Activated T-helper 2 cell treated with anti-CD3 and anti-CD28 coated beads, Interferon-gamma antibody, Interleukin-2, Interleukin-4, amounts not matched to agents 10 μg/mL and 5 μg/mL and 100 μg/mL, durations not matched to agents 14 hours and 24 hours and 36 hours (primary cell): ENCODE measurements at regions of chr1 and their contacts with region 1.

Region 1: DNA sequence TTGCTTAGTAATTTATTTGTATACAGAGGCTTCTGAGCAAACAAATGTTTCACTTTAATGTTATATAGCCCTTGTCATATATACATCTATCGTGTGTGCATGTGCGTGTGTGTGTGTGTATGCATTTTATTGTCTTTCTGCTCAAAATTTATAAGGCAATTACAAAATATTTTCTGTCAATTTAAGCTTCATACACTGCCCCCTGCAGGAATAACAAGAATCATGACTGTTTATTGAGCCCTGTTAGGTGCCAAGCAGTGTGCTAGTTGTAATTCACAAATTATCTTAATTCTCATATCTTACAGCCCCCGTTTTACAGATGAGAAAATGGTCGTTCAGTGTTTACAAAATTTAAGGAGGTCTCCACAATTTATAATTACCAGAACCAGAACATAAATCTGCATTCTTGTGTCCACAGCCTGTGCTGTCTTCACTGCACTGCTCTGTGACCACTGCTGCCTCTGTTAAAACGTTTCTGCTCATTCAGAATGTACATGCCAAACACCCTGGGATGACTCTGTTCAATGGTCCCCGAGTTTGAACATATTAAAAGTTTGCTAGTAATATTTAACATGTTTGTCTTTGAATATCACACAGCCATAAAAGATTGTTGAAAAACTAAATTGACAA is 181.3 kb downstream of the ATP6V1G3 start:
- DNase-seq: no peak
- H3K4me3 Mint-ChIP-seq: no peak overlapping the region
- H3K27ac Mint-ChIP-seq: no peak overlapping the region
- H3K4me1 Mint-ChIP-seq: peaks cover 10% of the 10 kb centered on the region
- H3K27me3 Mint-ChIP-seq: peaks cover 11% of the 10 kb centered on the region

Region 2: DNA sequence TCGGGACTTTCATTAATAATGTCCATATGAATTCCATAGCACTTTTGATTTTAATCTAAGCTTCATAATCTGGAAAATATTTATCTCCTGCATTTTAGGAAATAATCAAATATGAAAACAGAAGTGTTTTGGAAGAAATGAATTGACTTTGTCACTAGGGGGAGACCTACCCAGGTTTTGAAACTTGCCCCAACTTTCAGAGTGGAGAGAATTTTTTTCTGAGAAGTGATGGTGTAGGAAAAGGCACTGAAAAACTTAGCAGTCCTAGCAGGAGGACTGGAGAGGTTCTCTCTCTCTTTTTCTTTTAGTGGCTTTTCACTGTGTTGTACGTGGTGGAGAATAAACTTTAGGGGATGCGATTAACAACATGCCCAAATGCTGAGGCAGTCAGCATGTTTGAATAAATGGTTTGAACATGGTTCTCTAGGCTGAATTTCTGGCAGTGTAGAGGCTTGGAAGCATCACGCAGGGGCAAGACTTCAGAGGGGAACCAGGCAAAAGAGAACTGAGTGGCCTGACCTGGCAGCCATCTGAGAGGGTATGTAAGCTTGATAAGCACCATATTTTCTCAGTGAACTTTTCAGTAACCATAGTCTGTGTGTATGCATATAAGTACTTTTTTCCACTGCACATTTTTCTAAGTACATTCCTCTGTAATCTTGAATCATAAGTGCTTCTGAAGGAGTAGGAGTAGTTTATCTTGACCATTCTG is 270.6 kb before region 1 on chr1:
- intact Hi-C with region 1: loop called (anchors 2 kb)
- DNase-seq: no peak
- H3K4me3 Mint-ChIP-seq: no peak overlapping the region
- H3K27ac Mint-ChIP-seq: no peak overlapping the region
- H3K4me1 Mint-ChIP-seq: peaks cover 8% of the 10 kb centered on the region
- H3K27me3 Mint-ChIP-seq: no peaks in the 10 kb centered on the region

Region 3: DNA sequence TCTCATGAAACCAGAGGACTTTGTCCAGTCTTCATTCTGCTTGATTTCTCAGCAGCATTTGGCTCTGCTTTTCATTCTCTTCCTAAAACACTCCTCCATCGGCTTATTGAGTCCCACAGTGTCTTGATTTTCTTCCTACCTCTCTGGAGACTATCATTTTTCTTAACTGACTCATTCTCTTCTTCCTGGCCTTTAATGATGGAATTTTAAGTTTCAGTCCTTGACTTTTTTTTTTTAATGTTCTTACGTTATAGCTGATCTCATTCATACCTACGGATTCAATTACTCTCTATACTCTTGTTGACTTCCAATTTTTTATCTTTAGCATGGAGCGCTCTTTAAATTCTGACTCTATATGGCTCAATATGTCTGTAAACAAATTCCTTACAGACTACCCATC is 91.2 kb before region 1 on chr1:
- intact Hi-C with region 1: no loop called
- DNase-seq: no peak
- H3K4me3 Mint-ChIP-seq: no peak overlapping the region
- H3K27ac Mint-ChIP-seq: no peak overlapping the region
- H3K4me1 Mint-ChIP-seq: peaks cover 34% of the 10 kb centered on the region
- H3K27me3 Mint-ChIP-seq: no peaks in the 10 kb centered on the region

Region 4: GRCh38 chr1:198333744-198334143 is 25.4 kb before region 1 on chr1:
- intact Hi-C with region 1: no loop called
- DNase-seq: no peak
- H3K4me3 Mint-ChIP-seq: no peak overlapping the region
- H3K27ac Mint-ChIP-seq: no peak overlapping the region
- H3K4me1 Mint-ChIP-seq: no peaks in the 10 kb centered on the region
- H3K27me3 Mint-ChIP-seq: peaks cover 28% of the 10 kb centered on the region